Upper lobe of right lung (tissue), 1 donor: ENCODE measurements at regions of chr1 and their contacts with region 1.

Region 1: GRCh38 chr1:203216274-203217138 is 13.0 kb downstream of the CHIT1 start:
- DNase-seq: no peak
- ATAC-seq: peak; percentile 74
- H3K4me3 ChIP-seq: no peak overlapping the region
- H3K27ac ChIP-seq: no peak overlapping the region
- H3K4me1 ChIP-seq: peaks cover 9% of the 10 kb centered on the region
- H3K27me3 ChIP-seq: no peaks in the 10 kb centered on the region
- CTCF ChIP-seq: peak; percentile 82

Region 2: GRCh38 chr1:203038891-203039608 is 177.5 kb before region 1 on chr1:
- intact Hi-C with region 1: loop called (anchors 5 kb)
- DNase-seq: peak; percentile 82
- ATAC-seq: peak; percentile 90
- H3K4me3 ChIP-seq: no peak overlapping the region
- H3K27ac ChIP-seq: no peak overlapping the region
- H3K4me1 ChIP-seq: peaks cover 3% of the 10 kb centered on the region
- H3K27me3 ChIP-seq: no peaks in the 10 kb centered on the region
- CTCF ChIP-seq: peak; percentile 90

Region 3: GRCh38 chr1:203090421-203091387 is 125.8 kb before region 1 on chr1:
- intact Hi-C with region 1: no loop called
- DNase-seq: no peak
- ATAC-seq: peak; percentile 19
- H3K4me3 ChIP-seq: no peak overlapping the region
- H3K27ac ChIP-seq: no peak overlapping the region
- H3K4me1 ChIP-seq: no peaks in the 10 kb centered on the region
- H3K27me3 ChIP-seq: no peaks in the 10 kb centered on the region
- CTCF ChIP-seq: no peak

Region 4: GRCh38 chr1:203124546-203125317 is 91.8 kb before region 1 on chr1:
- intact Hi-C with region 1: loop called (anchors 5 kb)
- DNase-seq: peak; percentile 28
- ATAC-seq: no peak
- H3K4me3 ChIP-seq: no peak overlapping the region
- H3K27ac ChIP-seq: no peak overlapping the region
- H3K4me1 ChIP-seq: peaks cover 32% of the 10 kb centered on the region
- H3K27me3 ChIP-seq: peaks cover 57% of the 10 kb centered on the region
- CTCF ChIP-seq: no peak